ENCODE measurements at regions of chr7 and their contacts with region 1.

Region 1: GRCh38 chr7:23335621-23336020 is 36.5 kb downstream of the MALSU1 start:
- DNase-seq: no peak
- H3K4me3 ChIP-seq: no peak overlapping the region
- H3K27ac ChIP-seq: no peak overlapping the region
- H3K4me1 ChIP-seq: no peaks in the 10 kb centered on the region
- CTCF ChIP-seq: no peak

Region 2: GRCh38 chr7:22876986-22877729 is 458.5 kb before region 1 on chr7:
- CTCF ChIA-PET with region 1: no interaction called
- POLR2A ChIA-PET with region 1: no interaction called
- intact Hi-C with region 1: no loop called
- DNase-seq: no peak
- H3K4me3 ChIP-seq: no peak overlapping the region
- H3K27ac ChIP-seq: no peak overlapping the region
- H3K4me1 ChIP-seq: peaks cover 10% of the 10 kb centered on the region
- CTCF ChIP-seq: no peak

Region 3: GRCh38 chr7:23347682-23348180 is 12.1 kb after region 1 on chr7:
- CTCF ChIA-PET with region 1: no interaction called
- POLR2A ChIA-PET with region 1: interaction called, 11 read pairs
- intact Hi-C with region 1: no loop called
- DNase-seq: no peak
- H3K4me3 ChIP-seq: no peak overlapping the region
- H3K27ac ChIP-seq: no peak overlapping the region
- H3K4me1 ChIP-seq: peaks cover 15% of the 10 kb centered on the region
- CTCF ChIP-seq: no peak

Region 4: GRCh38 chr7:25149836-25150235 is 1814.2 kb after region 1 on chr7:
- CTCF ChIA-PET with region 1: no interaction called
- POLR2A ChIA-PET with region 1: no interaction called
- intact Hi-C with region 1: no loop called
- DNase-seq: no peak
- H3K4me3 ChIP-seq: no peak overlapping the region
- H3K27ac ChIP-seq: no peak overlapping the region
- H3K4me1 ChIP-seq: no peaks in the 10 kb centered on the region
- CTCF ChIP-seq: no peak

Measured in OCI-LY7 (cell line).